K562 (cell line): ENCODE measurements at regions of chr5 and their contacts with region 1.

Region 1: DNA sequence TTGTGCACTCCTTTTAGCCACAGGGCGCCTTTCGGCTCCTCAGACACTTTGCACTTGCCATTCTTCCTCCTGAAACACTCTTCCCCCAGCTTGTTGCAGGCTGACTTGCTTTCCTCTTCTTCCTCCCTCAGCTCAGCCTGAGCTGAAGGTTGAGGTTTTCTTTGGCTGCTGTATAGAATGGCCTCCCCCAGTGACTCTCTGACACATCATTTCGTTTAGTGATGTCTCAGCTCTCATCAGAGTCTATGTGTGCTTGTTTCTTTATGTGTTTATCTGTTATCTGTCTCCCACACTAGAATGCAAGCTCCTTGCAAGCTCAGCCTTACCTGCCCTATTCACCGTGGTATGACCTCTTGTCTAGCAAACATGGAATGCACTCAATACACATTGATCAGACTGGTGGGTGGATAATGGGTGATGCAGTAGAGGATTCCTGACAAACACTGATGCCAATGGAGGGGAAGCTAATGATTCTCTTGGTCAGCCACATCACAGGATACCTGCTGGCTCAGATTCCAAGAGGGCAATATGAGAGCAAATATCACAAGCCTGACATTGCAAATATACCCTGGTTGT is 112.9 kb upstream of the STC2 start:
- DNase-seq: no peak
- ATAC-seq: no peak
- H3K4me3 ChIP-seq: no peak overlapping the region
- H3K27ac ChIP-seq: no peak overlapping the region
- H3K4me1 ChIP-seq: no peaks in the 10 kb centered on the region
- H3K27me3 ChIP-seq: peaks cover 3 to 28% of the 10 kb centered on the region in 2 experiments; a peak in 4 of 5 replicates
- CTCF ChIP-seq: no peak
- EP300 ChIP-seq: no peak
- POLR2A ChIP-seq: no peak
- RAD21 ChIP-seq: no peak

Region 2: GRCh38 chr5:174706997-174707572 is 1265.9 kb after region 1 on chr5:
- CTCF ChIA-PET with region 1: no interaction called
- POLR2A ChIA-PET with region 1: no interaction called
- in situ Hi-C with region 1: no loop called
- intact Hi-C with region 1: loop called (anchors 10 kb)
- DNase-seq: no peak
- ATAC-seq: no peak
- H3K4me3 ChIP-seq: no peak overlapping the region
- H3K27ac ChIP-seq: no peak overlapping the region
- H3K4me1 ChIP-seq: no peaks in the 10 kb centered on the region
- H3K27me3 ChIP-seq: peaks cover 8 to 32% of the 10 kb centered on the region in 2 experiments
- CTCF ChIP-seq: no peak
- EP300 ChIP-seq: no peak
- POLR2A ChIP-seq: no peak
- RAD21 ChIP-seq: no peak